Activated CD4-positive, alpha-beta T cell treated with anti-CD3 and anti-CD28 coated beads for 36 hours (primary cell): ENCODE measurements at regions of chr19 and their contacts with region 1.

Region 1: GRCh38 chr19:41548954-41549688 is 26.8 kb upstream of the CEACAM21 start:
- DNase-seq: peak; percentile 89
- ATAC-seq: peak; percentile 76
- H3K4me3 Mint-ChIP-seq: peak overlapping the region; percentile 90
- H3K27ac Mint-ChIP-seq: peak overlapping the region; percentile 99
- H3K4me1 Mint-ChIP-seq: peaks cover 69% of the 10 kb centered on the region
- H3K27me3 Mint-ChIP-seq: no peaks in the 10 kb centered on the region

Region 2: GRCh38 chr19:40614622-40615411 is 934.3 kb before region 1 on chr19:
- CTCF ChIA-PET with region 1: no interaction called
- POLR2A ChIA-PET with region 1: no interaction called
- intact Hi-C with region 1: loop called in 1 of 2 experiments (anchors 5 kb)
- DNase-seq: peak; percentile 98
- ATAC-seq: peak; percentile 55
- H3K4me3 Mint-ChIP-seq: peak overlapping the region; percentile 99
- H3K27ac Mint-ChIP-seq: peak overlapping the region; percentile 100
- H3K4me1 Mint-ChIP-seq: peaks cover 58% of the 10 kb centered on the region
- H3K27me3 Mint-ChIP-seq: no peaks in the 10 kb centered on the region

Region 3: GRCh38 chr19:41500443-41500842 is 48.7 kb before region 1 on chr19:
- CTCF ChIA-PET with region 1: no interaction called
- POLR2A ChIA-PET with region 1: no interaction called
- intact Hi-C with region 1: no loop called
- DNase-seq: no peak
- ATAC-seq: no peak
- H3K4me3 Mint-ChIP-seq: no peak overlapping the region
- H3K27ac Mint-ChIP-seq: no peak overlapping the region
- H3K4me1 Mint-ChIP-seq: peaks cover 3% of the 10 kb centered on the region
- H3K27me3 Mint-ChIP-seq: peaks cover 20% of the 10 kb centered on the region

Region 4: GRCh38 chr19:41531438-41532311 is 17.4 kb before region 1 on chr19:
- CTCF ChIA-PET with region 1: interaction called, 450 read pairs
- POLR2A ChIA-PET with region 1: interaction called, 11 read pairs
- intact Hi-C with region 1: loop called in 1 of 2 experiments (anchors 1 kb)
- DNase-seq: peak; percentile 91
- ATAC-seq: peak; percentile 85
- H3K4me3 Mint-ChIP-seq: peak overlapping the region; percentile 76
- H3K27ac Mint-ChIP-seq: peak overlapping the region; percentile 65
- H3K4me1 Mint-ChIP-seq: peaks cover 60% of the 10 kb centered on the region
- H3K27me3 Mint-ChIP-seq: no peaks in the 10 kb centered on the region

Region 5: GRCh38 chr19:41627966-41628675 is 79.0 kb after region 1 on chr19:
- CTCF ChIA-PET with region 1: no interaction called
- POLR2A ChIA-PET with region 1: no interaction called
- intact Hi-C with region 1: no loop called
- DNase-seq: no peak
- ATAC-seq: no peak
- H3K4me3 Mint-ChIP-seq: no peak overlapping the region
- H3K27ac Mint-ChIP-seq: no peak overlapping the region
- H3K4me1 Mint-ChIP-seq: no peaks in the 10 kb centered on the region
- H3K27me3 Mint-ChIP-seq: peaks cover 10% of the 10 kb centered on the region

Region 6: DNA sequence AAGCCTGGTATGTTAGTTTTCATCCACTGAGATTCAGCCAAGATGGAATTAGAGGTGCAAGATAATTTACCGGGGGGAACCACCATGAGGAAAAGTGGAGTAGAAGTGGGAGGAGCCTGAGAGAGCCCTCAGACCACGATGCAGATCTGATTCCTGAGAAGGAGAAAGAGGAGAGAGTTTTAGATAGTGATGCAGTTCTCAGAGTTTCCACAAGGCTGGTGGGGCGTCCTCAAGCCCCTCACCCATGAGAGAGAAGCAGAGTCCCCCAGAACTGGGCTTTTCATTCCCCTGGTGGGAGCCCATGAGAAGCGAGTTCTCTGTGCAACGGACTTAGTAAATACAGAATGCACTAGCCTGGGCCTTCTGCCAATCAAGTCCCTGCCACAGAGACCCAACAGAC is 177.4 kb after region 1 on chr19:
- CTCF ChIA-PET with region 1: no interaction called
- POLR2A ChIA-PET with region 1: no interaction called
- intact Hi-C with region 1: no loop called
- DNase-seq: no peak
- ATAC-seq: no peak
- H3K4me3 Mint-ChIP-seq: no peak overlapping the region
- H3K27ac Mint-ChIP-seq: no peak overlapping the region
- H3K4me1 Mint-ChIP-seq: no peaks in the 10 kb centered on the region
- H3K27me3 Mint-ChIP-seq: peaks cover 43% of the 10 kb centered on the region